RWPE1 (cell line): ENCODE measurements at regions of chr17 and their contacts with region 1.

Region 1: DNA sequence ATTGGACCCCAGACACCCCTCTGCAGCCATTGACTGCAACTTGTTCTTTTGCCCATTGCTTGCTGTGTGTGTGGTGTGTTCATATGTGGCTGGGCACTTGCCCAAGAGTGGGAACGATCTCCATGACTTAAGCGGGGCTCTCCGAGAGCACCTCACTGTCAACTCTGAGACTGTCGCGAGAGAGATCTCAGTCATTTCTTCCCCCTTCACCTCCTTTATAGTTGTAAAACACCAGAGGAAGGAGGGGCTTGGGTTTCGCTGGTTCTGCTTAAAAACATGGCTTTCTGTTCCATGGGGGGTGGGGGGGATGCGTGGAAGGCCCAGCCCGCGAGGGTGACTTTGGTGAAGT is 7.4 kb downstream of the PHOSPHO1 start:
- DNase-seq: no peak
- H3K27ac ChIP-seq: no peak overlapping the region
- CTCF ChIP-seq: no peak

Region 2: DNA sequence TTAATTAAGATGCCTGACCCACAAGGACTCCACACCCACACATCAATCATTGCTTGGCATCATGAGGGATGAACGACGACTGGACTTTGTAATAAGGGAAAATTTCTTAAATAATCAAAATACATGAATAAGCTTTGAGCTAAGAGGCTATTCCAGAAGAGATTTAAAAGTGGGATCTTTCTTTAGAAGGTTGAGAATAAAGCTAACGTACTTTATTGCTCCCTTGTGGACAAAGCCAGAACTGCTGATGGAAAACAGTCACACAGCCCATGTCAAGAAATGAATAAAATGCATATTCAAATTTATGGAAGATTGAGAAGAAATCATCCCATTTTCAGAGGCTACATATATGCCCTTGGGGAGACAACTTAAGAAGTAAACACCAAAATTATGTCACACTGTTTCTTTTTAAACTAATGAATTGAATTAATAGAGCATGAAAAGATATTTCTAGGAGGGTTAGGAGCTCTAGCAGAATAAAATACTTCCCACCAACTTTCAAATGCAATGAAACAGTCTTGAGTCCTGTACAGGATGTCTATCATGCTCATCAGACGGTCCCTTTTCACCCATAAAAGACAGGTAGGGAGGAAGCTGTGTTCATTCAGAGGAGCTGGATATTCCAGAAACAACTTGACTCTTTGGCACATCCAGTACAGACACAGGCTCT is 67.7 kb after region 1 on chr17:
- CTCF ChIA-PET with region 1: interaction called, 10 read pairs
- POLR2A ChIA-PET with region 1: no interaction called
- DNase-seq: peak; percentile 31
- H3K27ac ChIP-seq: no peak overlapping the region
- CTCF ChIP-seq: peak; percentile 77